ENCODE measurements at regions of chr3 and their contacts with region 1.

Region 1: GRCh38 chr3:101010296-101010695 is 17.1 kb upstream of the ABI3BP start:
- DNase-seq: no peak
- H3K4me3 Mint-ChIP-seq: no peak overlapping the region
- H3K27ac Mint-ChIP-seq: no peak overlapping the region
- H3K4me1 Mint-ChIP-seq: no peaks in the 10 kb centered on the region
- H3K27me3 Mint-ChIP-seq: no peaks in the 10 kb centered on the region
- CTCF ChIP-seq: no peak

Region 2: GRCh38 chr3:100993309-100993708 is 17.0 kb before region 1 on chr3 and contains the start of gene ABI3BP:
- CTCF ChIA-PET with region 1: interaction called, 12 read pairs
- intact Hi-C with region 1: no loop called
- DNase-seq: peak; percentile 56
- H3K4me3 Mint-ChIP-seq: peak within 1 kb of the TSS; percentile 56
- H3K27ac Mint-ChIP-seq: peak within 1 kb of the TSS; percentile 27
- H3K4me1 Mint-ChIP-seq: peaks cover 6% of the 10 kb centered on the region
- H3K27me3 Mint-ChIP-seq: no peaks in the 10 kb centered on the region
- CTCF ChIP-seq: no peak
- total RNA-seq, gene ABI3BP: 5.2 and 19.5 TPM in 2 replicates

Region 3: DNA sequence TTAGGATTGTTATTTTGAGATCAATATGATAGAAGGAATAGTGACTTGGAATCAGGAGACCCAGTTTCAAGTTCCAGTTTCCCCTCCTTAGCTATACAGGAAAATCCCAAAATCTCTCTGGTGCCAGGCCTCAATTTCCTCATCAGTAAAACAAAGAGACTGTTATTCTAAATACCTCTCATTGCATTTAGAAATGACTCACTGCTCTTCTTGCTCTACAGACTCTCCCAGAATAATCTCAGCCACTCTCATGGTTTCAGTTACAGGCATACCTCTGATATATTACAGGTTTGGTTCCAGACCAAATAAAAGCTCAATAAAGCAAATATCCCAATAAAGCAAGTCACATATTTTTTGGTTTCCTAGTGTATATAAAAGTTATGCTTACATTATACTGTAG is 281.7 kb after region 1 on chr3:
- CTCF ChIA-PET with region 1: no interaction called
- intact Hi-C with region 1: no loop called
- DNase-seq: no peak
- H3K4me3 Mint-ChIP-seq: no peak overlapping the region
- H3K27ac Mint-ChIP-seq: no peak overlapping the region
- H3K4me1 Mint-ChIP-seq: no peaks in the 10 kb centered on the region
- H3K27me3 Mint-ChIP-seq: no peaks in the 10 kb centered on the region
- CTCF ChIP-seq: no peak

Region 4: DNA sequence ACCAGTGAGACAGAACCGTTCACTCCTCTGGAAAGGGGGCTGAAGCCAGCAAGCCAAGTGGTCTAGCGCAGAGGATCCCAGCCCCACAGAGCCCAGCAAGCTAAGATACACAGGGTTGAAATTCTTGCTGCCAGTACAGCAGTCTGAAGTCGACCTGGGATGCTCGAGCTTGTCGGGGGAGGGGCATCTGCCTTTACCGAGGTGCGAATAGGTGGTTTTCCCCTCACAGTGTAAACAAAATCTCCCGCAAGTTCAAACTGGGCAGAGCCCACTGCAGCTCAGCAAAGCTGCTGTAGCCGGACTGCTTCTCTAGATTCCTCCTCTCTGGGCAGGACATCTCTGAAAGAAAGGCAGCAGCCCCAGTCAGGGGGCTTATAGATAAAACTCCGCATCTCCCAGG is 725.5 kb after region 1 on chr3:
- CTCF ChIA-PET with region 1: no interaction called
- intact Hi-C with region 1: no loop called
- DNase-seq: no peak
- H3K4me3 Mint-ChIP-seq: no peak overlapping the region
- H3K27ac Mint-ChIP-seq: no peak overlapping the region
- H3K4me1 Mint-ChIP-seq: no peaks in the 10 kb centered on the region
- H3K27me3 Mint-ChIP-seq: no peaks in the 10 kb centered on the region
- CTCF ChIP-seq: no peak

Measured in Calu3 (cell line).